ENCODE measurements at regions of chr18 and their contacts with region 1.

Region 1: GRCh38 chr18:53698907-53699306 is 525.6 kb downstream of the MBD2 start:
- DNase-seq: peak in 1 of 2 donors; percentile 18
- ATAC-seq: peak in 4 of 8 donors; percentile 42 to 82 (median 68)
- H3K4me3 ChIP-seq: no peak overlapping the region
- H3K27ac ChIP-seq: no peak overlapping the region
- H3K4me1 ChIP-seq: no peaks in the 10 kb centered on the region
- H3K27me3 ChIP-seq: no peaks in the 10 kb centered on the region
- CTCF ChIP-seq: peak; percentile 24 to 63 (median 48)

Region 2: GRCh38 chr18:53687002-53687401 is 11.9 kb before region 1 on chr18:
- intact Hi-C with region 1: loop called in 1 of 10 experiments (anchors 1 kb)
- DNase-seq: no peak
- ATAC-seq: no peak
- H3K4me3 ChIP-seq: no peak overlapping the region
- H3K27ac ChIP-seq: no peak overlapping the region
- H3K4me1 ChIP-seq: no peaks in the 10 kb centered on the region
- H3K27me3 ChIP-seq: peaks cover 0 to 3% (median 0%) of the 10 kb centered on the region in 7 donors
- CTCF ChIP-seq: no peak

Region 3: DNA sequence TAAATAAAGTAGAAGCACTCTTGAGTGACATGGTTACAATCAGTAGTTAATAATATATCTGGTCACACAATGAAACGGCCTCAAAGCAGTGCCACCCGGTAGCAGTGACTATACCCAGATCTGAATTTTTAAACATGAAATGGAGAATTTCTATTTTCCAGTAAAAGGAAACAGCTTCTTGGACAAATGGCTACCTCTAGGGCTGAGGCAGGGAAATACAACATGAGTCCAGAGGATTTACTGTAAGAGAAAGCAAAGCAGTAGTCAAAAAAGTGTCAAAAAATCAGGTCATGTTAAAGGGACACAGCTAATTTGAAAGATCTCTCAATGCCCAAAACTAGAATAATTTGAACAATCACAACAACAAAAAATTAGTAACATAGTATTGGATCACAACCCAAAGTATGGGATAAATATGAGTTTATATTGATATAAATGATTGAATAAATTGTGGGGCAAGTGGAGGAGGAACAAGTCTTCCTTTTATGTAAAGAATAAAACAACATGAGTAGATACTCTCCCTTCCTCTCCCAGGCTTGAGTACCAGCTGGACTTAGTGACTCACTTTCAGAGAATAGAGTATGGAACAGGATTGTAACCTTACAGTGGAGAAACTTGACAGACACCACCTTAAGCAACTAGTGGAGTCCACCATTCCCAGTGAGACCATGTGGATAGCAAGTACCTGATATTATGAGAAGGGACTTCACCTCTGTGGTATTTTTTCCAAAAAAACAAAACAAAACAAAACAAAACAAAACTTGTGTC is 344.8 kb after region 1 on chr18:
- intact Hi-C with region 1: loop called in 1 of 10 experiments (anchors 5 kb)
- DNase-seq: no peak
- ATAC-seq: no peak
- H3K4me3 ChIP-seq: no peak overlapping the region
- H3K27ac ChIP-seq: no peak overlapping the region
- H3K4me1 ChIP-seq: peaks cover 0 to 9% (median 0%) of the 10 kb centered on the region in 9 donors
- H3K27me3 ChIP-seq: no peaks in the 10 kb centered on the region
- CTCF ChIP-seq: peak in 7 of 9 donors; percentile 8 to 33 (median 20)